Breast epithelium (tissue), 4 donors: ENCODE measurements at regions of chr5 and their contacts with region 1.

Region 1: GRCh38 chr5:163023846-163024245 is 413.5 kb upstream of the CCNG1 start:
- DNase-seq: no peak
- H3K4me3 ChIP-seq: no peak overlapping the region
- H3K27ac ChIP-seq: no peak overlapping the region
- H3K4me1 ChIP-seq: no peaks in the 10 kb centered on the region
- H3K27me3 ChIP-seq: no peaks in the 10 kb centered on the region
- CTCF ChIP-seq: no peak
- POLR2A ChIP-seq: no peak

Region 2: GRCh38 chr5:161219818-161220217 is 1804.0 kb before region 1 on chr5:
- intact Hi-C with region 1: loop called (anchors 10 kb)
- DNase-seq: no peak
- H3K4me3 ChIP-seq: no peak overlapping the region
- H3K27ac ChIP-seq: no peak overlapping the region
- H3K4me1 ChIP-seq: no peaks in the 10 kb centered on the region
- H3K27me3 ChIP-seq: no peaks in the 10 kb centered on the region
- CTCF ChIP-seq: no peak
- POLR2A ChIP-seq: no peak